ENCODE measurements at regions of chr9 and their contacts with region 1.

Region 1: DNA sequence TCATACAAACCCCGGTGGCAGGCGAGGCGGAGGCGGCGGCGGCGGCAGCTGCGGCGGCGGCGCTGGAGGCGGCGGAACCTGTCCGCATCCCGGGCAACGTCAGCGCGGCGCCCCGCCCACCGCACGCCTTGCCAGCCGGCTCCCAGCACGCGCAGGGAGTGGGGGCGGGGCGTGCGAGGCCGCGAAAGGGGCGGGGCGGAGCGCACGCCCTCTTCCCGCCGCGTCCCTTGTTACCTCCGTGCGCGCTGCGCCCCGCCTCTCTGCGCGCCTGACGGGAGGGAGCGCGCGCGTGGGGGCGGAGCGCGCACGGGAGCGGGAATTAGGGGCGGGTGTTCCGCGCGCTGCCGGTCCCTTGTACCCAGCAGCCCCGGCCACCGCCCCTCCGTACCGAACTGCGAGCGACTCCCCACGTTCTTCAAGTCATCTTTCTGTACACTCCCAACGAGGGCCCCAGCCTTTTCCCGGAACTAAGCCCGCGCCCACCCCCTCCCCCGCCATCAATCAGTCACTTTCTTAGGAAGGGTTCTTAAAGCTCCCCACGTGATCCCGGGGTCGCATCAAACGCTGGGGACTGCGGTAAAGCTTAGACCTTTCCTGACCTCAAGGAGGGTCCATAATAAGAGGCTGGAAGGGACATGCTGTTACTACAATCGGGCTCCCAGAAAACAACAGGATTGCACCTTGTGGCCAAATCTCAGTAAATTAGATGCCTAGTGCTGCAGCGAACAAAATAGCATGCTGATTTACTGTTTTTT is at the start of gene AGTPBP1:
- DNase-seq: peak; percentile 99
- ATAC-seq: peak; percentile 83
- H3K4me3 Mint-ChIP-seq: peak within 1 kb of the TSS; percentile 86
- H3K27ac Mint-ChIP-seq: peak within 1 kb of the TSS; percentile 96
- H3K4me1 Mint-ChIP-seq: peaks cover 38% of the 10 kb centered on the region
- H3K27me3 Mint-ChIP-seq: peaks cover 3% of the 10 kb centered on the region
- total RNA-seq, gene AGTPBP1: 39.8 to 45.9 TPM

Region 2: DNA sequence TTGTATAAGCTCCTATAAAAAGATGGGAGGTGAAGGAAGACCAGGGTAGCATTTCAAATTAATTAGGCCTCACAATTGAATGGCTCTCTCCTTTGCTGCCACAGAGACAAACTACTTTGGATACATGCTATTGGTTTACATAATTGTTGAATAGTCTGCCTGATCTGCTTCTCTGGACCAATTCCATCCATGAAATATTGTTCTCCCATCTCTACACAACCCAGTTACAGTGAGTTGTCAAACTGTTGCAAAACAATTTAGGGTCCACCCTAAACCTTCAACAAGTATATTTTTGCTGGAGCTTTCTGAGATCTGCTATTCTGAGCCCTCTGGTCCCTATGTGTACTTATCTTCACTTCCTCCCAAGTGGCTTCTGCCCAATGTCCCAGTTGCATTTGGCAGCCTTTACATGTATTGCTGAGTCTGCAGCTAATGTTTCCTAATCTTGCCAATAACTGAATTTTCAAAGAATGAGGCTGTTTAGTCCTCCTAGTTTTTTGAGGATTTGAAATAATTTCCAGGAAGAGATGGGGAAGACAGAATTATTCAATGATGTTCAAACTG is 39.2 kb before region 1 on chr9:
- CTCF ChIA-PET with region 1: interaction called, 6 read pairs
- POLR2A ChIA-PET with region 1: interaction called, 4 read pairs
- intact Hi-C with region 1: loop called (anchors 2 kb)
- DNase-seq: no peak
- ATAC-seq: no peak
- H3K4me3 Mint-ChIP-seq: no peak overlapping the region
- H3K27ac Mint-ChIP-seq: no peak overlapping the region
- H3K4me1 Mint-ChIP-seq: peaks cover 34% of the 10 kb centered on the region
- H3K27me3 Mint-ChIP-seq: no peaks in the 10 kb centered on the region

Region 3: DNA sequence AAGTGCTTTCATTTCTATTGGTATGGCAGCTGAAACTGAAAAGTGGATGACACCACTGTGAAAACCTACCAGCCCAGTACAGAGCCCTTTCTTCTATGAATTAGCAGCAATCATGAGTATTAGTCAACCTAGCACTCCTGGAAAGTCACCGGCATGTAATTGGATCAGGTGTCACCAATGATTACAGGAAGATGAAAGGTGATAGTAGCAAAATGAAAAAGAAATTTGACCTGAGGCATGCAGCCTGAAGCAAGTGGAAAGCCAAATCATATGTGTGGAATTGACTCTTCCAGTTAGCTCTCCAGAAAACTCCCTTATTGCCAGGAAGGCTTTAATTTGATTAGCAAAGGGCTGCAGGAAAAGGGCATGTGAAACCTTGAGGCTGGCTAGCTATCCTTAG is 117.7 kb after region 1 on chr9:
- CTCF ChIA-PET with region 1: no interaction called
- POLR2A ChIA-PET with region 1: no interaction called
- intact Hi-C with region 1: no loop called
- DNase-seq: peak; percentile 8
- ATAC-seq: peak; percentile 86
- H3K4me3 Mint-ChIP-seq: no peak overlapping the region
- H3K27ac Mint-ChIP-seq: no peak overlapping the region
- H3K4me1 Mint-ChIP-seq: peaks cover 10% of the 10 kb centered on the region
- H3K27me3 Mint-ChIP-seq: no peaks in the 10 kb centered on the region

Region 4: GRCh38 chr9:85884256-85884655 is 142.2 kb after region 1 on chr9:
- CTCF ChIA-PET with region 1: no interaction called
- POLR2A ChIA-PET with region 1: no interaction called
- intact Hi-C with region 1: no loop called
- DNase-seq: no peak
- ATAC-seq: no peak
- H3K4me3 Mint-ChIP-seq: no peak overlapping the region
- H3K27ac Mint-ChIP-seq: no peak overlapping the region
- H3K4me1 Mint-ChIP-seq: no peaks in the 10 kb centered on the region
- H3K27me3 Mint-ChIP-seq: no peaks in the 10 kb centered on the region

Region 5: GRCh38 chr9:85940832-85941621 is 199.0 kb after region 1 on chr9 and contains the start of gene NAA35:
- CTCF ChIA-PET with region 1: no interaction called
- POLR2A ChIA-PET with region 1: no interaction called
- intact Hi-C with region 1: loop called (anchors 1 to 2 kb)
- DNase-seq: peak; percentile 99
- ATAC-seq: peak; percentile 88
- H3K4me3 Mint-ChIP-seq: no peak within 1 kb of the TSS
- H3K27ac Mint-ChIP-seq: peak within 1 kb of the TSS; percentile 95
- H3K4me1 Mint-ChIP-seq: peaks cover 8% of the 10 kb centered on the region
- H3K27me3 Mint-ChIP-seq: no peaks in the 10 kb centered on the region
- total RNA-seq, gene NAA35: 24.9 to 25.8 TPM